Sigmoid colon (tissue), 7 donors: ENCODE measurements at regions of chr20 and their contacts with region 1.

Region 1: GRCh38 chr20:35092524-35093266 is at the start of gene TRPC4AP:
- DNase-seq: peak; percentile 93
- H3K4me3 ChIP-seq: peak within 1 kb of the TSS; percentile 59 to 97 (median 88)
- H3K27ac ChIP-seq: peak within 1 kb of the TSS; percentile 82 to 97 (median 94)
- H3K4me1 ChIP-seq: peaks cover 0 to 46% (median 26%) of the 10 kb centered on the region in 4 donors
- H3K27me3 ChIP-seq: no peaks in the 10 kb centered on the region
- CTCF ChIP-seq: peak; percentile 91 to 98 (median 94)
- EP300 ChIP-seq: no peak
- POLR2A ChIP-seq: peak; percentile 22 to 73
- total RNA-seq, gene TRPC4AP: 41.8 to 61.8 (median 48.6) TPM

Region 2: DNA sequence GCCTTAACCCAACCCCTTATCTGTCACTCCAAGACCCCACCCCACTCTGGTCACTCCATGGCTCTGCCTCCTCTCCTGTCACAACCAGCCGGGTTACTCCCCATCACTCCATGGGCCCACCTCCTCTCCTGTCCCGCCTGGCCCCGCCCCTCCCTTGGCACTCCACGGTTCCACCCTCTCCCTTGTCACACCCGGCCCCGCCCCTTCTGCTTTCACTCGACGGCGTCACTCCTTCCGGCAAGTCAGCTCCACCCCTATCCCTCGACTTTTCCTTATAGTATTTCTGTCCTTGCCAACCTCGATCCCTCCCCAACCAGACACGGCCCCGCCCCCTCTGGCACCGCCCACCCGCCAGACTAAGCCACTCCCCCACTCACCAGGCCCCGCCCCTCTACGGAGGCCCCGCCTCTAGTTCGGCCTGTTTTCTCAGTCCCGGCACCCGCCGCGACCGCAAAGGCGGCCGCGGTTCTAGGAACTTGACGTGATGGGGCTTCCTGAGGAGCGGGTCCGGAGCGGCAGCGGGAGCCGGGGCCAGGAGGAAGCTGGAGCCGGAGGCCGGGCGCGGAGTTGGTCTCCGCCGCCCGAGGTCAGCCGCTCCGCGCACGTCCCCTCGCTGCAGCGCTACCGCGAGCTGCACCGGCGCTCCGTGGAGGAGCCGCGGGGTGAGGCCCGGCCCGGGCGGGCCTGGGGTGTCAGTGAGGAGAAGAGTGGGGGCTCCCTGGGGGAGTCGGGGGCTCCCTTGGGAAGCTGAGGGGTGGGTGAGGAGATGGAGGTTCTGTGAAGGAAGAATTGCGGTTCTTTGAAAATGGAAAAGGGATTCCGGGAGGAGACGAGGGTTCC is 216.3 kb before region 1 on chr20 and contains the start of gene ACSS2:
- intact Hi-C with region 1: loop called (anchors 2 kb)
- DNase-seq: peak; percentile 100
- H3K4me3 ChIP-seq: peak within 1 kb of the TSS; percentile 76 to 94 (median 86)
- H3K27ac ChIP-seq: peak within 1 kb of the TSS; percentile 86 to 93 (median 92)
- H3K4me1 ChIP-seq: peaks cover 0 to 55% (median 40%) of the 10 kb centered on the region in 4 donors
- H3K27me3 ChIP-seq: no peaks in the 10 kb centered on the region
- CTCF ChIP-seq: no peak
- EP300 ChIP-seq: no peak
- POLR2A ChIP-seq: peak; percentile 55 to 80
- total RNA-seq, gene ACSS2: 29.7 to 70.1 (median 34.8) TPM

Region 3: DNA sequence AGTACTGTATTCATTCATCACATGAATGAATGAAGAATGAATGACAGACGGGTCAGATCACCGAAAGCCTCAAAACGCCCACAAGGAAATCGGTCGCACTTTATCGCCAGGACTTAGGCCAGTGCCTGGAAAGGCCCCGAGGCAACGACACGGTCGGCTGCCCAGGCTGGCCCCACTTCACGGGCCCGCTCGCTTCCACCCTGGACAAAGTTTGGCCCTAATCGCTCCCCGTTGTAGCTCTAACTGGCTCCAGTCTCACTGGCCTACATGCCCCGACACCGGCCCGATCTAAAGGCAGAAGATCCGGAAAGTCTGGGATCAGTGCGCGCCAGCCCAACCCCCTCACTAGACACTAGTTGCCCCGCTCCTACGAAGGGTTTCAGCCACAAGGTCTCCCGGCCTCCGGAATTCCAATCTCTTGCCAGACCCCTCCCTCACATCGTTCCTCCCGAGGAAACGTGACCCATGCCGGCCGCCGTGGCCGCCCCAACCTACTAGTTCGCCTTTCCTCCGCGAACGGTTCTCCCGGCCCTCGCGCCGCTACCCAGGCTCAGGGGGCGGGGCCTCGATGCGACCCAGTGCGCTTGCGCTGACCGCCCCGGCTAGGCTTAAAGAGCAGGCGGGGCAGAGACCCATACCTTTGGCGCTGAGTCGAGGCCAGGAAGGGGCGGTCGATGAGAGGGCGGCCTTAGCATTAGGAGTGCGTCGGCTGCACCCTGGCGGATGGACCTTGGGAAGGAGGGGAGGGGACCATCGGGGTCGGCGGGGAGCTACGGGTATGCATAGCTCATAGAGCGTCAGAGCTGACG is 137.3 kb before region 1 on chr20 and contains the starts of genes GSS and MYH7B:
- intact Hi-C with region 1: loop called (anchors 5 kb)
- DNase-seq: peak; percentile 98
- H3K4me3 ChIP-seq: peak within 1 kb of the TSS; percentile 60 to 81 (median 74)
- H3K27ac ChIP-seq: peak within 1 kb of the TSS; percentile 89 to 94 (median 91)
- H3K4me1 ChIP-seq: peaks cover 0 to 15% (median 14%) of the 10 kb centered on the region in 4 donors
- H3K27me3 ChIP-seq: no peaks in the 10 kb centered on the region
- CTCF ChIP-seq: peak; percentile 33 to 62 (median 53)
- EP300 ChIP-seq: no peak
- POLR2A ChIP-seq: peak; percentile 45 to 73
- total RNA-seq, gene GSS: 22.9 to 30.5 (median 25.5) TPM
- total RNA-seq, gene MYH7B: under 0.01 to 0.83 (median 0.60) TPM

Region 4: DNA sequence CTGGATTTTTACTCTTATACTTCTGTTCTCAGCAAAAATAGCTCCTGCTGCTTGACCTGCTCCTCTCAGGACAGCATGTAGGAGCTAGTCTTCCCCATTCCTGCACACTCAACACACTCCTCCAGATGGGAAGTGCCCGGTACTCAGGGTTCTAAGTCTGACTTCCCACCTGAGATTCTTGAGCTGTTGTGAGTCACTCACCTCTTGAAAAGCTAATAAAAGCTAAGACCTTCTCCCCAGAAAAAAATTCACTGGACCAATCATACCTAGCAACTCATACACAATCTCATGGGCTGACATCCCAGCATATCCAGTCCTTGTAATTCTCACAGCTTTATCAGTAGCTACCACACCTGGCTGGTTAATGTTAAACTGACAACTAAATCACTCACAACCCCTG is 53.5 kb before region 1 on chr20:
- intact Hi-C with region 1: no loop called
- DNase-seq: no peak
- H3K4me3 ChIP-seq: no peak overlapping the region
- H3K27ac ChIP-seq: no peak overlapping the region
- H3K4me1 ChIP-seq: no peaks in the 10 kb centered on the region
- H3K27me3 ChIP-seq: no peaks in the 10 kb centered on the region
- CTCF ChIP-seq: no peak
- EP300 ChIP-seq: no peak
- POLR2A ChIP-seq: no peak

Region 5: GRCh38 chr20:35146920-35147574 is 54.4 kb after region 1 on chr20 and contains the start of gene EDEM2:
- intact Hi-C with region 1: loop called (anchors 5 kb)
- DNase-seq: peak; percentile 97
- H3K4me3 ChIP-seq: peak within 1 kb of the TSS; percentile 60 to 75 (median 70)
- H3K27ac ChIP-seq: peak within 1 kb of the TSS; percentile 76 to 82 (median 79)
- H3K4me1 ChIP-seq: peaks cover 0 to 29% (median 22%) of the 10 kb centered on the region in 4 donors
- H3K27me3 ChIP-seq: no peaks in the 10 kb centered on the region
- CTCF ChIP-seq: no peak
- EP300 ChIP-seq: no peak
- POLR2A ChIP-seq: peak; percentile 25 to 36
- total RNA-seq, gene EDEM2: 8.4 to 14.3 (median 8.8) TPM

Region 6: GRCh38 chr20:35207950-35208611 is 115.4 kb after region 1 on chr20:
- intact Hi-C with region 1: loop called (anchors 5 kb)
- DNase-seq: peak; percentile 89
- H3K4me3 ChIP-seq: peak overlapping the region in 2 of 4 donors; percentile 3 to 32
- H3K27ac ChIP-seq: peak overlapping the region; percentile 72 to 85 (median 76)
- H3K4me1 ChIP-seq: peaks cover 0 to 12% (median 7%) of the 10 kb centered on the region in 4 donors
- H3K27me3 ChIP-seq: no peaks in the 10 kb centered on the region
- CTCF ChIP-seq: peak; percentile 80 to 87 (median 82)
- EP300 ChIP-seq: no peak
- POLR2A ChIP-seq: no peak

Region 7: DNA sequence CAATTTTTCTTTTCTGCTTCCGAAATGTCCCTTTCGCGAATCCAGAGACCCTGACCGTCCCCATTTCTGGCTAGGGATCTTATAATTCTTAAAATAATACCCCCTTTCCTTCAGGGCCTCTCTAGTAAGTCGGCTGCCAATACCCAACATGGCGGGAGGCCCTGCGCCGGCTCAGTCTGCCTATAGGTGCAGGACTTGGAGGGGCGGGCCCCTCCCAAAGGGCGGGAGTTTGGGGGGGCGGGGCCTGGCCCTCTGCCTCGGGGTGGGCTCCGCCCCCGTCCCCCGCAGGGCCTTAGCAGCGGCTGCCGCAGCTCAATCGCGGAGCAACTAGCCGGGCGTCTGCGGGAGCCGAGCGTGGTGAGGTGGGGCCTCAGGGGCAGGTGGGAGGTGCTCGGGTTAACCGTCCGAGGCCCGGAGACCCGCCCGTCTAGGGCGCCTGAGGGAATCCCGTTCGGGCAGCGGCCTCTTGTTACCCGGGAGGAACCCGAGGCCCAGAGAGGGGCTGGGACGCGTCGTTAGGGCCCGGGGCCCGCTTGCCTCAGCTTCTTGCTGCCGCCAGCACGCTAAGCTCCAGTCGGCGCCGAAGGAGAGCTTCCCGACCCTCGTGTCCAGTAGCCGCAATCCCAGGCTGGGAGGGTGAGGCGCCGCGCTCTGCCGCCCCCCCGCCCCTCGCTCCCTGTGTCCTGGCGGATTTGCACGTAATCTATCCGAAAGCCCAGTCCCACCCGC is 362.4 kb after region 1 on chr20 and contains the start of gene CEP250:
- intact Hi-C with region 1: loop called (anchors 10 kb)
- DNase-seq: peak; percentile 96
- H3K4me3 ChIP-seq: peak within 1 kb of the TSS; percentile 64 to 79 (median 70)
- H3K27ac ChIP-seq: peak within 1 kb of the TSS; percentile 88 to 93 (median 90)
- H3K4me1 ChIP-seq: peaks cover 0 to 19% (median 16%) of the 10 kb centered on the region in 4 donors
- H3K27me3 ChIP-seq: no peaks in the 10 kb centered on the region
- CTCF ChIP-seq: no peak
- EP300 ChIP-seq: no peak
- POLR2A ChIP-seq: peak in 1 of 2 donors; percentile 34
- total RNA-seq, gene CEP250: 12.8 to 35.2 (median 16.5) TPM